Naive thymus-derived CD8-positive, alpha-beta T cell (primary cell): ENCODE measurements at regions of chr5 and their contacts with region 1.

Region 1: GRCh38 chr5:137665678-137666460 is 70.0 kb downstream of the KLHL3 start:
- DNase-seq: peak; percentile 18 to 71 (median 37)
- ATAC-seq: peak; percentile 100
- H3K4me3 Mint-ChIP-seq: peak overlapping the region in 5 of 10 donors; percentile 14 to 61 (median 21)
- H3K27ac Mint-ChIP-seq: peak overlapping the region; percentile 12 to 89 (median 68)
- H3K4me1 Mint-ChIP-seq: peaks cover 12 to 19% (median 18%) of the 10 kb centered on the region in 4 donors
- H3K27me3 Mint-ChIP-seq: no peaks in the 10 kb centered on the region

Region 2: GRCh38 chr5:137487600-137487999 is 178.3 kb before region 1 on chr5:
- POLR2A ChIA-PET with region 1: no interaction called
- DNase-seq: no peak
- ATAC-seq: no peak
- H3K4me3 Mint-ChIP-seq: no peak overlapping the region
- H3K27ac Mint-ChIP-seq: no peak overlapping the region
- H3K4me1 Mint-ChIP-seq: no peaks in the 10 kb centered on the region
- H3K27me3 Mint-ChIP-seq: peaks cover 0 to 10% (median 1%) of the 10 kb centered on the region in 5 donors

Region 3: DNA sequence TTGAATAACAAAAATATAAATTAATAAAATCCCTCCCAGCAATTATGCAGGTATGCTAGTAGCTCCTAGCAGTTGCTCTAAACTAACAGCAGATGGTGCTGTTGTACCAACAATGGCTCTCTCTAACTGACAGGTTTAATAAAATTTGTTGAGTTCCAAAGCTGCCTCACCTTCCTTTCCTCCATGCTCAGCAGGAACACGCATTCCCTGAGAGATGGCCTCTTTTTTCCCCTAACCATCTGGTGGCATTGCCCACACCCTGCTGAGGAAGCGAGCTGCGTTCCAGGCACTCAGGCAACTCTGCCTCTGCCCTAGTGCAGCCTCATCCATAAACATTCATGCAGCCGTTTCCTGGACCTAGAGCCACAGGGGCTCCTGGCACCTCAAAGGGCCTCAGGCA is 36.2 kb before region 1 on chr5:
- POLR2A ChIA-PET with region 1: no interaction called
- DNase-seq: peak in 8 of 10 donors; percentile 14 to 64 (median 48)
- ATAC-seq: peak; percentile 72 to 80
- H3K4me3 Mint-ChIP-seq: no peak overlapping the region
- H3K27ac Mint-ChIP-seq: no peak overlapping the region
- H3K4me1 Mint-ChIP-seq: peaks cover 0 to 1% (median 0%) of the 10 kb centered on the region in 4 donors
- H3K27me3 Mint-ChIP-seq: no peaks in the 10 kb centered on the region

Region 4: GRCh38 chr5:137649228-137649935 is 16.5 kb before region 1 on chr5:
- POLR2A ChIA-PET with region 1: no interaction called
- DNase-seq: no peak
- ATAC-seq: no peak
- H3K4me3 Mint-ChIP-seq: no peak overlapping the region
- H3K27ac Mint-ChIP-seq: peak overlapping the region in 2 of 10 donors; percentile 1 to 65
- H3K4me1 Mint-ChIP-seq: no peaks in the 10 kb centered on the region
- H3K27me3 Mint-ChIP-seq: no peaks in the 10 kb centered on the region

Region 5: DNA sequence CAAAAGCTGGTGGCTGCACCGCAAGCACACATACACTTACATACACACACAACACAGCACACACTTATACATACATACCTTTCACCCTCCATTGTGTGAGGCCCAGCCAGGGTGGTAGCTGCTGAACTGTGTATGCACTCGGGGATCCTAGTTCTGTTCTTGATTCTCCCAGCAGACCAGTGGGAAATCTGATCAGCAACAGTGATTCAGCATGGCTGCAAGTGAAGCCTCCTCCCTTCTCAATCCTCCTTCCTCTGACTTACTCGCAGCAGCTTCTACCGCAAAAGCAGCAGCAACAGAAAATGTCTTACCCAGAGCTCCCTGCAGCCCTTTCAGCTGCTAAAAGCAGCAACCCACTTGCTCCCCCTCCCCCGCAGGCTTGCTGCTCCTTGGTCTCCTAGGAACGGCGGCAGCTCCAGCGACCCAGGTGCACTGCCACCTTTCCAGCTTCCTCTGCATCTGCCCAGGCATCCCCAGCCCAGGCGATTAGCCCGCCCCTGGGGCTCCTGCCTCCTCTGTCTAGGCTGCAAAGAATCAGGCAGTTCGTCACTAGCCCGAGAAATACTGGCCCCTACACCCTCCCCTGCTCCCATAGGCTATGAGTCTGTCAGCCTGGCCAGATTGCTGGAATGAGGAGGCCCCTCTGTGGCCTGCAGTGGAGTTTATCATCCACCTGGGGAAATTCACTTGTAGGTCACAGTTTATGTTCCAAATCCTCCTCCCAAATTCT is 69.9 kb after region 1 on chr5 and contains the start of gene KLHL3:
- POLR2A ChIA-PET with region 1: interaction called, 27 read pairs
- DNase-seq: peak; percentile 13 to 67 (median 27)
- ATAC-seq: peak; percentile 38 to 49
- H3K4me3 Mint-ChIP-seq: no peak within 1 kb of the TSS
- H3K27ac Mint-ChIP-seq: no peak within 1 kb of the TSS
- H3K4me1 Mint-ChIP-seq: peaks cover 0 to 29% (median 20%) of the 10 kb centered on the region in 4 donors
- H3K27me3 Mint-ChIP-seq: no peaks in the 10 kb centered on the region
- polyA plus RNA-seq, gene KLHL3: 2.7 to 8.1 (median 4.5) TPM

Region 6: GRCh38 chr5:137933491-137933911 is 267.6 kb after region 1 on chr5:
- POLR2A ChIA-PET with region 1: no interaction called
- DNase-seq: no peak
- ATAC-seq: no peak
- H3K4me3 Mint-ChIP-seq: no peak overlapping the region
- H3K27ac Mint-ChIP-seq: peak overlapping the region in 3 of 10 donors; percentile 2 to 61 (median 53)
- H3K4me1 Mint-ChIP-seq: peaks cover 0 to 2% (median under 1%) of the 10 kb centered on the region in 4 donors
- H3K27me3 Mint-ChIP-seq: no peaks in the 10 kb centered on the region